ENCODE measurements at regions of chr21 and their contacts with region 1.

Region 1: GRCh38 chr21:15713412-15713811 is 16.4 kb upstream of the USP25 start:
- DNase-seq: no peak
- H3K4me3 ChIP-seq: no peak overlapping the region
- H3K27ac ChIP-seq: no peak overlapping the region
- H3K4me1 ChIP-seq: no peaks in the 10 kb centered on the region
- H3K27me3 ChIP-seq: no peaks in the 10 kb centered on the region
- CTCF ChIP-seq: no peak

Region 2: GRCh38 chr21:14942801-14943490 is 770.5 kb before region 1 on chr21:
- CTCF ChIA-PET with region 1: no interaction called
- POLR2A ChIA-PET with region 1: interaction called, 23 read pairs
- intact Hi-C with region 1: no loop called
- DNase-seq: no peak
- H3K4me3 ChIP-seq: no peak overlapping the region
- H3K27ac ChIP-seq: no peak overlapping the region
- H3K4me1 ChIP-seq: no peaks in the 10 kb centered on the region
- H3K27me3 ChIP-seq: no peaks in the 10 kb centered on the region
- CTCF ChIP-seq: no peak

Region 3: DNA sequence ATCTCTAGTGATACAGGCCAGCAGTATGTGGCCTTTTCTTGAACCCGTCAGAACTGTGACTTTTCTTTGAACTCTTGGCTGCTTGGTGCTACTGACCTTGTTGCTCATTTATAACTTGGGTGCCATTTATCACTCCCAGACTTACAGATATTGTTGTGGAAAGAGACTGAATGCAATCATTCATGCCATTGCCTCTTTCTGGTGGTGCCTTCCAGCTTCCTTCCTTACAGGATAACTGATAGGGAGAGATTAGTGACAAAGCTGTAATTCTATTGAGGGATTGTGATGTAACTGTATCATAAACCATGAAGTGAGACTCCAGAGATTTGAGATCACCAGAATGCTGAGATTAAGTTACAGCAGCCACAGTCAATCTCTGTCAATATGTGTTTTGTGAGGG is 272.9 kb after region 1 on chr21:
- CTCF ChIA-PET with region 1: no interaction called
- POLR2A ChIA-PET with region 1: no interaction called
- intact Hi-C with region 1: no loop called
- DNase-seq: no peak
- H3K4me3 ChIP-seq: no peak overlapping the region
- H3K27ac ChIP-seq: no peak overlapping the region
- H3K4me1 ChIP-seq: no peaks in the 10 kb centered on the region
- H3K27me3 ChIP-seq: no peaks in the 10 kb centered on the region
- CTCF ChIP-seq: no peak

Region 4: GRCh38 chr21:16395285-16395684 is 681.9 kb after region 1 on chr21:
- CTCF ChIA-PET with region 1: interaction called, 11 read pairs
- POLR2A ChIA-PET with region 1: no interaction called
- intact Hi-C with region 1: no loop called
- DNase-seq: no peak
- H3K4me3 ChIP-seq: no peak overlapping the region
- H3K27ac ChIP-seq: no peak overlapping the region
- H3K4me1 ChIP-seq: no peaks in the 10 kb centered on the region
- H3K27me3 ChIP-seq: no peaks in the 10 kb centered on the region
- CTCF ChIP-seq: no peak